Mucosa of descending colon (tissue), 3 donors: ENCODE measurements at regions of chr9 and their contacts with region 1.

Region 1: GRCh38 chr9:125143375-125144090 is at the start of gene SCAI:
- DNase-seq: peak; percentile 99 to 100 (median 99)
- ATAC-seq: peak; percentile 99
- H3K4me3 ChIP-seq: peak within 1 kb of the TSS; percentile 44
- H3K4me1 ChIP-seq: peaks cover 6% of the 10 kb centered on the region
- CTCF ChIP-seq: peak; percentile 99
- total RNA-seq, gene SCAI: 6.3 to 11.7 (median 8.8) TPM

Region 2: GRCh38 chr9:124880501-124880900 is 263.0 kb before region 1 on chr9:
- intact Hi-C with region 1: no loop called
- DNase-seq: no peak
- ATAC-seq: peak; percentile 21
- H3K4me3 ChIP-seq: no peak overlapping the region
- H3K4me1 ChIP-seq: no peaks in the 10 kb centered on the region
- CTCF ChIP-seq: no peak

Region 3: GRCh38 chr9:124940693-124941453 is 202.7 kb before region 1 on chr9 and contains the start of gene GOLGA1:
- intact Hi-C with region 1: loop called (anchors 10 kb)
- DNase-seq: peak; percentile 97 to 98 (median 98)
- ATAC-seq: peak; percentile 96
- H3K4me3 ChIP-seq: peak within 1 kb of the TSS; percentile 80
- H3K4me1 ChIP-seq: peaks cover 8% of the 10 kb centered on the region
- CTCF ChIP-seq: no peak
- total RNA-seq, gene GOLGA1: 23.6 to 37.1 (median 31.2) TPM

Region 4: GRCh38 chr9:124960409-124960752 is 183.2 kb before region 1 on chr9:
- intact Hi-C with region 1: no loop called
- DNase-seq: no peak
- ATAC-seq: no peak
- H3K4me3 ChIP-seq: no peak overlapping the region
- H3K4me1 ChIP-seq: no peaks in the 10 kb centered on the region
- CTCF ChIP-seq: no peak